T-cell (primary cell): ENCODE measurements at regions of chr12 and their contacts with region 1.

Region 1: GRCh38 chr12:51421266-51421884 is 3.3 kb upstream of the SLC4A8 start:
- DNase-seq: peak in 25 of 35 experiments; percentile 4 to 68 (median 17)
- ATAC-seq: peak in 3 of 4 experiments; percentile 22 to 42 (median 37)
- H3K4me3 ChIP-seq: no peak overlapping the region
- H3K4me3 Mint-ChIP-seq: no peak overlapping the region
- H3K27ac ChIP-seq: no peak overlapping the region
- H3K27ac Mint-ChIP-seq: no peak overlapping the region
- H3K4me1 ChIP-seq: peaks cover 4 to 17% of the 10 kb centered on the region in 2 experiments
- H3K4me1 Mint-ChIP-seq: peaks cover 12 to 22% (median 17%) of the 10 kb centered on the region in 3 donors
- H3K27me3 ChIP-seq: no peaks in the 10 kb centered on the region
- H3K27me3 Mint-ChIP-seq: no peaks in the 10 kb centered on the region

Region 2: DNA sequence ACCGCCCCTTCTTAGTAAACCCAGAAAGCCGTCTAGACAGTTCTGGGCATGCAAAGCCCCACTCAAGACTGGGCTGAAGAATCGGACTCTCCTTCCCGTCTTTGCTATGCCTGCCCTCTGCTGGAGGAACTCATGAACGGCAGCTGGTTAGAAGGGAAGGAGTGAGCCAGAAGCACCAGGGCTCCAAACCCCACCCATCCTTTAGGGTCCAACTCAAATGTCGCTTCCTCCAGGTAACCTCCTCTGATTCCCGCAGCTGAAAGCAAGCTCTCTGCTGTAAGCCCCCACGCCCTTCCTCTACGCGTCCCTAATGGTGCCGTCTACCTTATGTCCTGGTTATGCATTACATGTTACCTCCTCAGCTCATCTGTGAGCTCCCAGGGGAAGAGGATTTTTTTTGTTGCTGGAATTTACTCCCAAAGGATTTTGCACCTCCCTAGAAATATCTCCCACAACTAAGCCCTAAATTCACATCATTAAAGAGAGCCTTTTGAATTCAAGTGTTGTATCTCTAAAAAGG is 110.7 kb after region 1 on chr12:
- CTCF ChIA-PET with region 1: interaction called, 12 to 14 read pairs
- POLR2A ChIA-PET with region 1: no interaction called
- DNase-seq: peak; percentile 26 to 82 (median 64)
- ATAC-seq: peak; percentile 72 to 93 (median 88)
- H3K4me3 ChIP-seq: no peak overlapping the region
- H3K4me3 Mint-ChIP-seq: no peak overlapping the region
- H3K27ac ChIP-seq: no peak overlapping the region
- H3K27ac Mint-ChIP-seq: no peak overlapping the region
- H3K4me1 ChIP-seq: peaks cover 0 to 6% of the 10 kb centered on the region in 2 experiments
- H3K4me1 Mint-ChIP-seq: peaks cover 0 to 6% (median 5%) of the 10 kb centered on the region in 3 donors
- H3K27me3 ChIP-seq: peaks cover 0 to 10% of the 10 kb centered on the region in 2 experiments
- H3K27me3 Mint-ChIP-seq: peaks cover 0 to 19% of the 10 kb centered on the region in 2 donors